B cell (primary cell): ENCODE measurements at regions of chr9 and their contacts with region 1.

Region 1: DNA sequence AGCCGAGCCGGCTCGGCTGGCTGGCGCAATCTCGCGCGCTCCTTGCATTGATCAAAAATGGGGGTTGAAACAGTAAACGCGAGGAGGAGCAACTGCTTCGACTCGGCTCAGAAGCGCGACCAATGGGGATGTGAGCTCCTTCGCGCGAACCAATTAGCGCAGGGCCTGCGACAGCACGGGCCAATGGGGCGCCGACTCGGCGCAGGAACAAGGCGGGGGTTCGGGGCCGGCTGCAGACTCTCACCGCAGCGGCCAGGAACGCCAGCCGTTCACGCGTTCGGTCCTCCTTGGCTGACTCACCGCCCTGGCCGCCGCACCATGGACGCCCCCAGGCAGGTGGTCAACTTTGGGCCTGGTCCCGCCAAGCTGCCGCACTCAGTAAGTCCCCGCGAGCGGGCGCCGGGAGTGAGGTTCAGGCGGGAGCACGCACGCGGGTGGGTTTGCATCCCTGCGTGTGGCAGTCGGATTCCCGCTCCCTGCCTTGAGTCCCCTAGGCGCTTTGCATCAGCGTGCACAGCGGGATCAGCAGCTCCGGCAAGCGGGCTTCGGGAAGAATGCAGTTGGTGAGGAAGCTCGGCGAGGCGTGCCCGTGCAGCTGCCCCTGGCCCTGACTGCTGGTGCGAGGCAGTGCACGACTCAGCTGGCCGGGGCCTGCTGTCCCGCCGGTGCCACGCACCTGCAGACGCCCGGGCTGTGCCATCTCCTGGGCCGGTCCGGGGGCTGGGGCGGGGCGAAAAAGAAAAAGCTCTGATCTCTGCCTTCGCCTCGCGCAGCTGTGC is at the start of gene PSAT1:
- DNase-seq: peak; percentile 88
- ATAC-seq: peak; percentile 97
- H3K4me3 ChIP-seq: peak within 1 kb of the TSS; percentile 67 to 77 (median 70)
- H3K4me3 Mint-ChIP-seq: peak within 1 kb of the TSS; percentile 87
- H3K27ac ChIP-seq: no peak within 1 kb of the TSS
- H3K27ac Mint-ChIP-seq: peak within 1 kb of the TSS; percentile 70
- H3K4me1 ChIP-seq: peaks cover 17 to 26% of the 10 kb centered on the region in 2 donors
- H3K4me1 Mint-ChIP-seq: peaks cover 18% of the 10 kb centered on the region
- H3K27me3 ChIP-seq: peaks cover 0 to 17% (median 6%) of the 10 kb centered on the region in 4 experiments
- H3K27me3 Mint-ChIP-seq: no peaks in the 10 kb centered on the region
- CTCF ChIP-seq: no peak
- total RNA-seq, gene PSAT1: 5.0 and 5.2 TPM in 2 replicates

Region 2: DNA sequence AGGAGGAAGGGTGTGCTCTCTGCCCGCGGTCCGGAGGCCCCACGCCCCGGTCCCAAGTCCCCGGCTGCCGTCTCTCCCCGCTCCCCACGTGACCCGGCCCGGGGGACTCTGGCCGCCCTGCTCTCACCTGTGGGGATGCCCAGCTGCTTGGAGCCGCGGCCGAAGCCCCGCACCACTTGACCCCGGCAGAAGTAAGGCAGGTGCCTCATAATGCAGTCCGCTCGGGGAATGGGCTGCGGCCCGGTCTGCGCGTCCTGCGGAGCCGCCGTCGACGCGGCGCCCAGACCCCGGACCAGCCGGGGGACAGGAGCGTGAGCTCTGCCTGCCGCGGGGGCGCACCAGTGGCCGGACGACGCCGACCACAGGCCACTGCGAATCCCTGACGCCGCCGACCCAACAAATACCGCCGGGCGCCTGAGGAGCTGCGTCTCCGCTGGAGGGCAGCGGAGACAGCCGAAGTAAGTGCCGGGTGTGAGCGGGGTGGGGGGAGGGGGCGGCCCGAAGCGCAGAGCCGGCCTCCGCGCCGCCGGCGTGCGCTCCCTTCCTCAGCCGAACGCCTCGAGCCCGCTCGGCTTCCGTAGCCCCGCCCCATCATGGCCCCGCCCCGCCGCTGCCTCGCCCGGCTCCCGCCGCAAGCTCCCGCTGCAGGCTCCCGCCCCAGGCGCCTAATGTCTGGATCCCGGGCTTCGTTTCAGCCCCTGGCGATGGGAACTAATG is 1903.0 kb before region 1 on chr9 and contains the start of gene RFK:
- CTCF ChIA-PET with region 1: no interaction called
- POLR2A ChIA-PET with region 1: no interaction called
- intact Hi-C with region 1: loop called (anchors 10 kb)
- DNase-seq: peak; percentile 95
- ATAC-seq: peak; percentile 92
- H3K4me3 ChIP-seq: peak within 1 kb of the TSS; percentile 93 to 98 (median 97)
- H3K4me3 Mint-ChIP-seq: peak within 1 kb of the TSS; percentile 94
- H3K27ac ChIP-seq: peak within 1 kb of the TSS; percentile 78 to 98
- H3K27ac Mint-ChIP-seq: peak within 1 kb of the TSS; percentile 98
- H3K4me1 ChIP-seq: peaks cover 9 to 15% of the 10 kb centered on the region in 2 donors
- H3K4me1 Mint-ChIP-seq: peaks cover 15% of the 10 kb centered on the region
- H3K27me3 ChIP-seq: no peaks in the 10 kb centered on the region
- H3K27me3 Mint-ChIP-seq: no peaks in the 10 kb centered on the region
- CTCF ChIP-seq: peak; percentile 61
- total RNA-seq, gene RFK: 7.3 and 9.0 TPM in 2 replicates

Region 3: DNA sequence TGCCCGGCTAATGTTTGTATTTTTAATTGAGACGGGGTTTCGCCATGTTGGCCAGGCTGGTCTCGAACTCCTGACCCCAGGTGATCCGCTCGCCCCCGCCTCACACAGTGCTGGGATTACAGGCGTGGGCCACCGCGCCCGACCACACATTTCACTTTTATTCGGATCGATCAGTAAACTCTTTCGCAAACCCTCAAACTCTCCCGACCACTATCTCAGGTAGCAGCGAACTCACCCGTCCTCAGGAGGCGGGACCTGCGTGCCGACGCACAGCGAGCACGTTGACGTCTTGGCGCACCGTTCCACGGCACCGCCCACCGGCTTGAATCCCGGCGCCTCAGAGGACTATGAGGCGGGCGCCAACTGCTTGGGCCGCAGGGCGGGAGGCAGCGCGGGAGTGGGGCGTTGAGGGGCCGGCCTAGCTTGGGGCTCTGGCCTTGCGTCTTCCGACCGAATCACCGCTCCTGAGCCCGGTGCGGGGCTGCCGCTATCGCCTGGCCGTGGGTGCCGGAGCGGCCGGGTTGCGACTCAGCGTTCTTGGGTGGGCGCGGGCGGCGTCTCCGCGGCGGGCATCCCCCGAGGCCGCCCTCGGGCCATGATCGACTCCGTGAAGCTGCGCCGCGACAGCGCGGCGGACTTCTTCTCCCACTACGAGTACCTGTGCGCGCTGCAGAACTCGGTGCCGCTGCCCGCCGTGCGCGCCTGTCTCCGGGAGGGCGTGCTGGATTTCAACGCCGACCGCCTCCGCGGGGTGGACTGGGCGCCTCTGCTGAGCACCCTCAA is 61.1 kb before region 1 on chr9 and contains the start of gene CEP78:
- CTCF ChIA-PET with region 1: no interaction called
- POLR2A ChIA-PET with region 1: no interaction called
- intact Hi-C with region 1: loop called (anchors 1 kb)
- DNase-seq: peak; percentile 91
- ATAC-seq: peak; percentile 99
- H3K4me3 ChIP-seq: peak within 1 kb of the TSS; percentile 50 to 90 (median 84)
- H3K4me3 Mint-ChIP-seq: no peak within 1 kb of the TSS
- H3K27ac ChIP-seq: peak within 1 kb of the TSS; percentile 58 to 84
- H3K27ac Mint-ChIP-seq: peak within 1 kb of the TSS; percentile 93
- H3K4me1 ChIP-seq: peaks cover 13 to 17% of the 10 kb centered on the region in 2 donors
- H3K4me1 Mint-ChIP-seq: peaks cover 26% of the 10 kb centered on the region
- H3K27me3 ChIP-seq: no peaks in the 10 kb centered on the region
- H3K27me3 Mint-ChIP-seq: no peaks in the 10 kb centered on the region
- CTCF ChIP-seq: no peak
- total RNA-seq, gene CEP78: 27.7 and 28.8 TPM in 2 replicates

Region 4: GRCh38 chr9:78311886-78312524 is 14.9 kb after region 1 on chr9:
- CTCF ChIA-PET with region 1: no interaction called
- POLR2A ChIA-PET with region 1: no interaction called
- intact Hi-C with region 1: no loop called
- DNase-seq: no peak
- ATAC-seq: no peak
- H3K4me3 ChIP-seq: no peak overlapping the region
- H3K4me3 Mint-ChIP-seq: no peak overlapping the region
- H3K27ac ChIP-seq: no peak overlapping the region
- H3K27ac Mint-ChIP-seq: no peak overlapping the region
- H3K4me1 ChIP-seq: no peaks in the 10 kb centered on the region
- H3K4me1 Mint-ChIP-seq: no peaks in the 10 kb centered on the region
- H3K27me3 ChIP-seq: no peaks in the 10 kb centered on the region
- H3K27me3 Mint-ChIP-seq: no peaks in the 10 kb centered on the region
- CTCF ChIP-seq: no peak